AG04450 (cell line): ENCODE measurements at regions of chr11 and their contacts with region 1.

Region 1: DNA sequence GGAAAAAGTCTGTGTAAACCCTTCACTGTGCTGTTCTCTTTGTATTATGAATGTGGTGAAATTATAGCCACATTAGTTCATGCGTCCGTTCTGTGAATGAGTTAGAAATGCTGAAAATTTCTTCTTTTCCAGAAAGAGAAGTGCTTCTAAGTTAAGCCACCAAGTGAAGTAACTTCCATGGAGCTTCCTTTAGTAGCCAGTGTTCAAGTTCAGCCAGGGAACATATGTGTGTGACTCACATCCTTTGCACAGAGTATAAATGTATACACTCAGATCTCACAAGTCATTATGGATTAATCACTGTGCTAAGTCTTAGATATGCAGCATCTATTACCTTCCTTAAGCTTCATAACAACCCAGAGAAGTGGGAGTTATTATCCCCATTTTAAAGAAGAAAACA is 3.1 kb upstream of the MMP8 start:
- DNase-seq: peak; percentile 68
- H3K4me3 ChIP-seq: no peak overlapping the region
- H3K27ac ChIP-seq: no peak overlapping the region
- H3K27me3 ChIP-seq: no peaks in the 10 kb centered on the region
- CTCF ChIP-seq: no peak

Region 2: DNA sequence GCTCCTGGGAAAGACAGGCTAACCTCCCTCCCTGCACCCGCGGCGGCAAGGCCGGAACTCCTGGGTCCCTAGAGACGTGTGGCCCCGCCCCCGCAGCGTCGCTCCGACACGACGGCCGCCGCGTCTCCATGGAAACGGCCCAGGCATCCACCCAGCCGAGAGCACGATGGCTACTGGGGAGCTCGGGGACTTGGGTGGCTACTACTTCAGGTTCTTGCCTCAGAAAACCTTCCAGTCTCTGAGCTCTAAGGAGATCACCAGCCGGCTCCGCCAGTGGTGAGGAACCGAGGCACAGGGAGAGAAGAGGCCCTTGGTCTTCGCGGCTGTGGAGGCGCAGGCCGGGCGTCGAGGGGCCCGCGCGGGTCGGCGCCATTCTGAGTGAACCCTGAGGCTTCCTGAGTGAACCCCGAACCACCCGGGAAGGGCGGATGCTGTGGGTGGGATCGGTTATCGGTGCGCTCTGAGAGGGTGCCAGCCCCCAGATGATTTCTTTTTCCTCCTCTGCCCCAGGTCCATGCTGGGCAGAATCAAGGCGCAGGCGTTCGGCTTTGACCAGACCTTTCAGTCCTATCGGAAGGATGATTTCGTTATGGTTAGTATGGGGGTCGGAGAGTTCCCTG is 680.5 kb before region 1 on chr11 and contains the start of gene CFAP300:
- CTCF ChIA-PET with region 1: no interaction called
- POLR2A ChIA-PET with region 1: interaction called, 10 read pairs
- DNase-seq: no peak
- H3K4me3 ChIP-seq: peak within 1 kb of the TSS; percentile 65
- H3K27ac ChIP-seq: peak within 1 kb of the TSS; percentile 31
- H3K27me3 ChIP-seq: no peaks in the 10 kb centered on the region
- CTCF ChIP-seq: no peak
- polyA plus RNA-seq, gene CFAP300: 2.3 and 3.4 TPM in 2 replicates

Region 3: DNA sequence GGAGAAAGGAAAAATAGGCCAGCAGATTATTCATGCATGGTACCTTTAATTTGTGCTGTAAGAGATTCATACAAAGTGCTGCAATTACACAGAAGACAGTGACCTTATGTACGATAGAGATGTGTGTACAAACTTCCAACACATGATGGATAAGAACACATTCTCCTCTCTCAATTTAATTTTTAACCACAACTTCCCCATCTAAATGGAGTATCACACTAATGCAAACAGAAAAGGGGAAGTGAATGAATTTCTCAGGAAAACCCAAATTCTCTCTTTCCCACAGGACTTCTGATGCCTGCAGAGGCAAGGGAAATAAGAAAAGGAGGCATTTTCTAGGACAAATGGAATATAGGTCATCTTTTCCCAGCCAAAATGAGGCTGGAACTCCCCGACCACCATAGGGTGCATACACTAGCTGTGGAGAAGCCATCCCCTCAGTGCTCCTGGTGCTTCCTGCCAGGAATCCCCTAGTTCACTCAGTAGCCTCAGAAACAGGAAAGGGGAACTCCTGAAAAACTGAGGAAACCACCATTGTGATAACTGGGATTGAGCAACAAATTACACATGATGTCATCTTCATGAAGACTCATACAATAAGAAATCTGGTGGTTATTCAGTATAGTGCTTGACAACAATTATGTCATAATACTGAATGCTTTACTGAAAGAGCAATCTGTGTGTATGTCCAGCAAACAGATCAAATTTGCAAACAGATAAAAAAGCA is 30.1 kb after region 1 on chr11:
- CTCF ChIA-PET with region 1: no interaction called
- POLR2A ChIA-PET with region 1: no interaction called
- DNase-seq: peak; percentile 45
- H3K4me3 ChIP-seq: no peak overlapping the region
- H3K27ac ChIP-seq: no peak overlapping the region
- H3K27me3 ChIP-seq: peaks cover 8% of the 10 kb centered on the region
- CTCF ChIP-seq: no peak

Region 4: GRCh38 chr11:102810945-102811660 is 83.2 kb after region 1 on chr11:
- CTCF ChIA-PET with region 1: no interaction called
- POLR2A ChIA-PET with region 1: no interaction called
- DNase-seq: no peak
- H3K4me3 ChIP-seq: no peak overlapping the region
- H3K27ac ChIP-seq: no peak overlapping the region
- H3K27me3 ChIP-seq: no peaks in the 10 kb centered on the region
- CTCF ChIP-seq: peak; percentile 71